HCT116 (cell line): ENCODE measurements at regions of chr16 and their contacts with region 1.

Region 1: DNA sequence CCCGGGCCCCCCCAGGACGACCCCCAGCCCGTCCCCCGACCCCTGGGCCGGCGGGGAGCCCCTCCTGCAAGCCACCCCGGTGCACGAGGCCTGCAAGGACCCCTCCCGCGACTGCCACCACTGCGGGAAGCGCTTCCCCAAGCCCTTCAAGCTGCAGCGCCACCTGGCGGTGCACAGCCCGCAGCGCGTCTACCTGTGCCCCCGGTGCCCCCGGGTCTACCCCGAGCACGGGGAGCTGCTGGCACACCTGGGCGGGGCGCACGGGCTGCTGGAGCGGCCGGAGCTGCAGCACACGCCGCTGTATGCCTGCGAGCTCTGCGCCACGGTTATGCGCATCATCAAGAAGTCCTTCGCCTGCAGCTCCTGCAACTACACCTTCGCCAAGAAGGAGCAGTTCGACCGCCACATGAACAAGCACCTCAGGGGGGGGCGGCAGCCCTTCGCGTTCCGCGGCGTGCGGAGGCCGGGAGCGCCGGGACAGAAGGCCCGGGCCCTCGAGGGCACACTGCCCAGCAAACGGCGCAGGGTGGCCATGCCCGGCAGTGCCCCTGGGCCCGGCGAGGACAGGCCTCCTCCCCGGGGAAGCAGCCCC is 15.6 kb upstream of the ZFPM1 start:
- DNase-seq: peak; percentile 37
- ATAC-seq: peak; percentile 83
- H3K4me3 ChIP-seq: no peak overlapping the region
- H3K27ac ChIP-seq: no peak overlapping the region
- H3K4me1 ChIP-seq: peaks cover 0 to 6% of the 10 kb centered on the region in 2 experiments; a peak in 2 of 4 replicates
- H3K27me3 ChIP-seq: no peaks in the 10 kb centered on the region
- CTCF ChIP-seq: peak in 2 of 3 experiments; percentile 99; a peak in 4 of 6 replicates
- POLR2A ChIP-seq: no peak
- RAD21 ChIP-seq: no peak

Region 2: GRCh38 chr16:87982491-87983415 is 454.7 kb before region 1 on chr16:
- CTCF ChIA-PET with region 1: interaction called, 9 read pairs
- POLR2A ChIA-PET with region 1: no interaction called
- RAD21 ChIA-PET with region 1: no interaction called
- intact Hi-C with region 1: loop called (anchors 5 kb)
- DNase-seq: no peak
- ATAC-seq: peak; percentile 56
- H3K4me3 ChIP-seq: no peak overlapping the region
- H3K27ac ChIP-seq: no peak overlapping the region
- H3K4me1 ChIP-seq: no peaks in the 10 kb centered on the region; a peak in 1 of 4 replicates
- H3K27me3 ChIP-seq: no peaks in the 10 kb centered on the region
- CTCF ChIP-seq: no peak
- POLR2A ChIP-seq: no peak
- RAD21 ChIP-seq: no peak

Region 3: GRCh38 chr16:88194397-88195268 is 242.8 kb before region 1 on chr16:
- CTCF ChIA-PET with region 1: interaction called, 9 read pairs
- POLR2A ChIA-PET with region 1: no interaction called
- RAD21 ChIA-PET with region 1: no interaction called
- intact Hi-C with region 1: loop called (anchors 1 kb)
- DNase-seq: no peak
- ATAC-seq: peak; percentile 49
- H3K4me3 ChIP-seq: no peak overlapping the region
- H3K27ac ChIP-seq: no peak overlapping the region
- H3K4me1 ChIP-seq: peaks cover 0 to 5% of the 10 kb centered on the region in 2 experiments; a peak in 1 of 4 replicates
- H3K27me3 ChIP-seq: no peaks in the 10 kb centered on the region
- CTCF ChIP-seq: peak in 1 of 3 experiments; percentile 19; a peak in 1 of 6 replicates
- POLR2A ChIP-seq: no peak
- RAD21 ChIP-seq: no peak; the same call in 1 of the 2 replicates

Region 4: DNA sequence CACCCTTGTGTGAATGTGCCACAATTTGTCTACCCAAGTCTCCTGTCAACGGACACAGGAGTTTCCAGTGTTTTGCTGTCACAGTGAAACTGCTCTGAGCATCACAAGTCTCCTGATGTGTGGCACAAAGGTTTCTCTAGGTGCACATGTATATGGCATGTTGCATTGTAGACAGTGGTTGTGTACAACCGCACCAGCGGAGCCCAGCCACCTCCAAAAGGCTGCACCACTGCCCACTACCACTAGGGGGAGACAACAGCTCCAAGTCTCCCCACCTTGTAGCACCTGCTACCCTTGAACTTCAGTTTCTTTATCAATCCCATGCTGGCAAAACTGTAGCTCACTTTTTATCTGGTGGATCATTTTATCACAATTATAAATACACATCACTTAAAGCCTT is 150.2 kb before region 1 on chr16:
- CTCF ChIA-PET with region 1: interaction called, 46 read pairs
- POLR2A ChIA-PET with region 1: interaction called, 3 read pairs
- RAD21 ChIA-PET with region 1: interaction called, 6 to 7 read pairs
- intact Hi-C with region 1: loop called (anchors 1 kb)
- DNase-seq: peak; percentile 63
- ATAC-seq: peak; percentile 98
- H3K4me3 ChIP-seq: no peak overlapping the region
- H3K27ac ChIP-seq: no peak overlapping the region
- H3K4me1 ChIP-seq: peaks cover 4 to 14% of the 10 kb centered on the region in 2 experiments; a peak in 3 of 4 replicates
- H3K27me3 ChIP-seq: peaks cover 20% of the 10 kb centered on the region; the same call in 1 of the 2 replicates
- CTCF ChIP-seq: peak; percentile 93 to 100 (median 100)
- POLR2A ChIP-seq: no peak
- RAD21 ChIP-seq: peak; percentile 96

Region 5: GRCh38 chr16:88368036-88368435 is 69.4 kb before region 1 on chr16:
- CTCF ChIA-PET with region 1: no interaction called
- POLR2A ChIA-PET with region 1: no interaction called
- RAD21 ChIA-PET with region 1: no interaction called
- intact Hi-C with region 1: no loop called
- DNase-seq: no peak
- ATAC-seq: no peak
- H3K4me3 ChIP-seq: no peak overlapping the region
- H3K27ac ChIP-seq: no peak overlapping the region
- H3K4me1 ChIP-seq: no peaks in the 10 kb centered on the region
- H3K27me3 ChIP-seq: peaks cover 11% of the 10 kb centered on the region; the same call in 1 of the 2 replicates
- CTCF ChIP-seq: no peak
- POLR2A ChIP-seq: no peak
- RAD21 ChIP-seq: no peak

Region 6: GRCh38 chr16:88452482-88453216 is 15.2 kb after region 1 on chr16:
- CTCF ChIA-PET with region 1: interaction called, 10 read pairs
- POLR2A ChIA-PET with region 1: no interaction called
- RAD21 ChIA-PET with region 1: no interaction called
- intact Hi-C with region 1: no loop called
- DNase-seq: peak; percentile 92
- ATAC-seq: peak; percentile 75
- H3K4me3 ChIP-seq: peak overlapping the region; percentile 46 to 60
- H3K27ac ChIP-seq: peak overlapping the region; percentile 62
- H3K4me1 ChIP-seq: peaks cover 34 to 56% of the 10 kb centered on the region in 2 experiments
- H3K27me3 ChIP-seq: no peaks in the 10 kb centered on the region
- CTCF ChIP-seq: no peak
- POLR2A ChIP-seq: no peak
- RAD21 ChIP-seq: no peak

Region 7: DNA sequence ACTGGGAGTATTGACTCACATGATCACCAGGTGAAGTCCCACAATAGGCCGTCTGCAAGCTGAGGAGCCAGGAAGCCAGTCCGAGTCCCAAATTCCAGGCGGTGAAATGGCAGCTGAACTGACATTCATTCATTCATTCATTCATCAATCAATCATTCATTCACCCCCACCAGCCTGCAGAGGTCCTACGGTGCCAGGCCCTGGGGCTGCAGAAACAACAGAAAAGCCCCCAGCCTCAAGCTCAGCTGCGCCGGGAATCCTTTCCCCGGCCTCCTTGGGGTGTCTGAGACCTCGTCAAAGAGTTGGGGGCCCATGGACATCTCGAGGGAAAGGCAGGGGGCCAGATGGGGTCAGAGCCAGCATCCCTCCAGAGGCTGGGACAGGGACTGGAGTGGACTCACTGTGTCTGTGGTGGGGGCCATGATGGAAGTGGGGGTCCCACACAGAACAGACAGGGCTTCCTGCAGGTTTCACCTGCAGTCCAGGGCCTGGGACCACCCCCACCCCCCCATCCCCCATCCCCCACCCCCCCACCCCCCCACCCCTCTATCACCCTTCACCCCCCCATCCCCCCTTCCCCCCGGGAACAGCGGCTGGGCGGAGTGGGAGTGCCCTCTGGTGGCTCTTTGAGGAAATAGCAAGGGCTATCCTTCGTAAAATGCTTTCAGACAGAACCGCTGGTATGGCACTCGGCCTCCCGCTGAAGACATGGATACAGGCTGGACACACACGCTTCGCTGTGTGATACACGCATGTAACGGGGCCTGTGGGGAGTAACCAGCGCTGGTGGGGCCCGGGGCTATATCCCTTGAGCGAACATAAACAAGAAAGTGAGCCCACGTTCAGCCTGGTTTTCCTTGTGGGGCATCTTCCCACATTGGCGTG is 124.3 kb after region 1 on chr16:
- CTCF ChIA-PET with region 1: interaction called, 13 read pairs
- POLR2A ChIA-PET with region 1: no interaction called
- RAD21 ChIA-PET with region 1: interaction called in 1 of 2 experiments, 3 read pairs
- intact Hi-C with region 1: no loop called
- DNase-seq: peak; percentile 36
- ATAC-seq: peak; percentile 76
- H3K4me3 ChIP-seq: peak overlapping the region; percentile 28 to 45
- H3K27ac ChIP-seq: no peak overlapping the region; the same call in 1 of the 2 replicates
- H3K4me1 ChIP-seq: peaks cover 10 to 34% of the 10 kb centered on the region in 2 experiments; a peak in 3 of 4 replicates
- H3K27me3 ChIP-seq: no peaks in the 10 kb centered on the region
- CTCF ChIP-seq: peak; percentile 73 to 85 (median 79)
- POLR2A ChIP-seq: no peak
- RAD21 ChIP-seq: peak; percentile 85